ENCODE measurements at regions of chr15 and their contacts with region 1.

Region 1: DNA sequence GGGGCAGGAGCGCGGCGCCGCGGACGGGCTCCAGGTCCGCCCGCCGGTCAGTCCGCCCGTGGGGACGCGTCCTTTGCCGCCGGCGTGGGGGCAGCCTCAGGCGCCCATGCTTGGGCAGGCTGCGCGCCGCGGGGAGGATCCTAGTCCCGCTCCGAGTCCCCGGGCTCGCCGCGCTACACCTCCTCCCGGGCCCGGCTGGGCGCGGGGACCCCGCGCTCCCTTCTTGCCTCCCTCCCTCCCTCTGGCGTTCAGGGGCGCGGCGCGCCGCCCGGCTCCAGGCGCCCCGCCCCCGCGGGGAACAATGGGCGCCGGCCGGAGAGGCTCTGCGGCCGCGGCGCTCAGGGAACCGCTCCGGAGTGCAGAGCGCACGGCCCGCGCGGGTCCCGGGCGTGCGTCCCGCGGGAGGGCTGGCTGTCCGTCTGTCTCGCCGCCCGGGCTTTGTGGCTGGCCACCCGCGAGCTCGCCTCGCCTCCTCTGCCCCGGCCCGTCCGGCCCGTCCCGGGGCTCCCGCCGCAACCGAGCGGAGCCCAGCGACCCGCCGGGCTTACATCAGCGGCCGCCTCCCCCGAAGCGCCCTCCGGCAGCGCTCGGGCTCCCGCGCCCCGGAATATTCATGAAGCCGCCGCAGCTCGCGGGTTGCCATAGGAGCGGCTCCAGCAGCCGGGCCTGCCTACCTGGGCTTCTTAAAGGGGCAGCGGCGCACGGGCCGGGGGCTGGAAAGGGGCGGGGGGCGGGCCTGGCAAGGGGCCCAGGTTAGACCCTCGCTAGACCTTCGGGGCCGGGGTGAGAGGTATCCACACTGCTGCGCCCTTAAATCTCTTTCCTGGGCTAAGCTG is at the start of gene HCN4:
- DNase-seq: no peak
- total RNA-seq, gene HCN4: not detected

Region 2: DNA sequence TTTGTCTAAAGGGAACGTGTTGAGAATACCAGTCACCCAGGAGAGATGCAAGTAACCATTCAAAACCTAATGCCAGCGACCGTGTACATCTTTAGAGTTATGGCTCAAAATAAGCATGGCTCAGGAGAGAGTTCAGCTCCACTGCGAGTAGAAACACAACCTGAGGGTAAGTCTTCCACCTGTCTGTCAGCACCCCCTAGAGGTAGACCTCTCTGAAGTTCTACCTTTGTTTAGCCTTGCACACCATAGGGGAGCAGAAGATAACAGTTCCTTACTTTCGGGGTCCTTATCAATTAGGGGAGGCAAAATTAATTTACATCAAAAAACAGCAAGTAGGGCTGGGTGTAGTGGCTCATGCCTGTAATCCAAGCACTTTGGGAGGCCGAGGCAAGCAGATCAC is 124.2 kb before region 1 on chr15:
- intact Hi-C with region 1: no loop called
- DNase-seq: no peak

Region 3: DNA sequence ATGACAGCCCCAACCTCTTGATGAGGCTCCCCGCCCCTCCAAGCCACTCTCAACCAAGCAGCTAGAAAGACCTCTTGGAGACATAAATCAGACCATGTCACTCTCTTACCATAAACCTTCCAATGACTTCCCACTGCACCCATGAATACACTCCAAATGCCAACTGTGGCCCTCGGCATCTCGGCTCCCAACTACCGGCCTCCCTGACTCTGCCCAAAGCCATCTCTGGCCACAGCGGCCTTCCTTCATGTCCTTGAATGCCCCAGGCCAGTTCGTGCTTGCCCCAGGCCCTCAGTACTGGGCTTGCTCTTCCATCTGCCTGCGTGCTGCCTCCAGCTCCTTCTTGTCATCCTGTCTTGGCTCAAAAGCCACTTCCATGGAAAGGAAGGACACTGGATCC is 31.8 kb before region 1 on chr15:
- intact Hi-C with region 1: loop called in 1 of 2 experiments (anchors 1 kb)
- DNase-seq: no peak

Measured in posterior vena cava (tissue), 2 donors.